Psoas muscle (tissue), 8 donors: ENCODE measurements at regions of chr4 and their contacts with region 1.

Region 1: GRCh38 chr4:48557478-48557877 is 67.4 kb downstream of the ZAR1 start:
- DNase-seq: no peak
- ATAC-seq: no peak
- H3K4me3 ChIP-seq: no peak overlapping the region
- H3K27ac ChIP-seq: no peak overlapping the region
- H3K4me1 ChIP-seq: no peaks in the 10 kb centered on the region
- H3K27me3 ChIP-seq: no peaks in the 10 kb centered on the region
- CTCF ChIP-seq: no peak

Region 2: GRCh38 chr4:48518143-48518542 is 39.3 kb before region 1 on chr4:
- intact Hi-C with region 1: loop called in 1 of 2 experiments (anchors 5 kb)
- DNase-seq: no peak
- ATAC-seq: no peak
- H3K4me3 ChIP-seq: no peak overlapping the region
- H3K27ac ChIP-seq: no peak overlapping the region
- H3K4me1 ChIP-seq: no peaks in the 10 kb centered on the region
- H3K27me3 ChIP-seq: no peaks in the 10 kb centered on the region
- CTCF ChIP-seq: no peak

Region 3: GRCh38 chr4:48543796-48544195 is 13.7 kb before region 1 on chr4:
- intact Hi-C with region 1: no loop called
- DNase-seq: no peak
- ATAC-seq: no peak
- H3K4me3 ChIP-seq: no peak overlapping the region
- H3K27ac ChIP-seq: no peak overlapping the region
- H3K4me1 ChIP-seq: no peaks in the 10 kb centered on the region
- H3K27me3 ChIP-seq: no peaks in the 10 kb centered on the region
- CTCF ChIP-seq: no peak

Region 4: DNA sequence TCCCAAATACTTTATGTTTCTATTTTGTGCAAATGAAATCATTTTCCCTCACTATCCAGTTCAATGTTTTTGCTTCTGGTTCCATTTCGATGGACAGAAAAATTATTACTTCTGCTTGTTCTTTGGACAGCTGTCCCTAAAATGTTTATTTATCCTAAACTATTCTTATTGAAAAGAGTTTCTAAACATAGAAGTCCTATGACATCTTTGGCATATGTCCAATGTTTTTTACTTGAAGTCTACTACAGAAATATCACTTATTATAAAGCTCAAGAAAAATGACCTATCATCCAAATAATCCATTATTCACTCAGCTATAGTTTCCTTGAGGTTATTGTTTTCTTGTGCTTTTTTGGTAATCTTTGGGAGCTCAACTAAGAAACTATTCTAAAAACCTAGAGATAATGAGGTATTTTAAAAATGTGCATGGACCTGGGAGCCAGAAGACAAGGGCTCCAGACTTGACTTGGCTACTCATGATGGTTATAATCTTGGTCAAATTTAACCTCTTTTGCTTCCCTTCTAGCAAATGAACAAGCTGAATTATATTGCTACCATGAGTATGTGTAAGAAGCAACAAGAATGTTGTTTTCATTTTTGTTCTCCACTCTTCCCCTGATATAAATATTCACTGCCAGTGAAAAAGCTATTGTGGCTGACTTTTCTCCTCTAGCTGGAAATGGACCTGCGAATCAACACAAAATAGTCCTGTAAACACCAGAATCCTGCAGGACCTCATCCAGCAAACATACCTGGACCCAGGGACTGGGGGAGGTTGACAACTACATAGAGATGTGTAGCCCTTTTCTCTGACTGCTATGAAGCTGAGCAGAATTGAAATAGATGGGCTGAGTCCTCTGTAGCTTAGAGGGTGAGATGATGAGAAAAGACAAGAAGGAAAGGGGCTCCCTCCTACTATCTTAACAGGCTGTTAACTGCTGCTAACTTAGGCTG is 85.2 kb after region 1 on chr4:
- intact Hi-C with region 1: no loop called
- DNase-seq: no peak
- ATAC-seq: no peak
- H3K4me3 ChIP-seq: no peak overlapping the region
- H3K27ac ChIP-seq: no peak overlapping the region
- H3K4me1 ChIP-seq: peaks cover 43% of the 10 kb centered on the region
- H3K27me3 ChIP-seq: no peaks in the 10 kb centered on the region
- CTCF ChIP-seq: no peak